Spleen (tissue), 13 donors: ENCODE measurements at regions of chr20 and their contacts with region 1.

Region 1: GRCh38 chr20:46400828-46401477 is 5.5 kb downstream of the ELMO2 start:
- DNase-seq: no peak
- H3K4me3 ChIP-seq: peak overlapping the region in 1 of 8 donors; percentile 43
- H3K27ac ChIP-seq: peak overlapping the region; percentile 5 to 93 (median 84)
- H3K4me1 ChIP-seq: peaks cover 68 to 100% (median 92%) of the 10 kb centered on the region in 6 donors
- H3K27me3 ChIP-seq: no peaks in the 10 kb centered on the region
- CTCF ChIP-seq: no peak
- POLR2A ChIP-seq: no peak

Region 2: GRCh38 chr20:46367967-46368901 is 32.7 kb before region 1 on chr20:
- intact Hi-C with region 1: loop called (anchors 5 kb)
- DNase-seq: no peak
- H3K4me3 ChIP-seq: no peak overlapping the region
- H3K27ac ChIP-seq: peak overlapping the region in 1 of 8 donors; percentile 10
- H3K4me1 ChIP-seq: peaks cover 2 to 30% (median 25%) of the 10 kb centered on the region in 6 donors
- H3K27me3 ChIP-seq: no peaks in the 10 kb centered on the region
- CTCF ChIP-seq: no peak
- POLR2A ChIP-seq: no peak